A549 (cell line): ENCODE measurements at regions of chr3 and their contacts with region 1.

Region 1: DNA sequence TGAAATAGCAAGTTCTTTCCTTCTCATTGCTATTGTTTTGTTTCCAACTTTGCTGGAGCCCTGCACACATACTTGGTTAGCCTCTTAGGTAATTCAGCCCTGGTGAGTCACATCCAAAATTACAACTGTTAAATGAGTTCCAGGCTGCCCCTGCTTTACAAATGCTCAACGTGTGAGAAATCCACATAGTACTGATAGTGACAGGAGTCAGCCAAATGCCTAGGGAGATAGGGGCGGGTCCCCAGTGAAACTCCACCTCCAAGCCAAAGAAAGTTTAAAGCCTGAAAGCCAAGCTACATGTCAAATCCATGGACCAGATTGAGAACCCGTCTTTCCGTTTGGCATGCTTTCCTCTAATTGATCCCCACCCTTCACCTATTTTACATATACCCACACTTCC is 81.3 kb upstream of the RNF7 start:
- DNase-seq: no peak
- ATAC-seq: no peak
- H3K4me3 ChIP-seq: no peak overlapping the region
- H3K27ac ChIP-seq: no peak overlapping the region
- H3K4me1 ChIP-seq: no peaks in the 10 kb centered on the region
- CTCF ChIP-seq: no peak
- EP300 ChIP-seq: no peak
- POLR2A ChIP-seq: no peak
- RAD21 ChIP-seq: no peak

Region 2: DNA sequence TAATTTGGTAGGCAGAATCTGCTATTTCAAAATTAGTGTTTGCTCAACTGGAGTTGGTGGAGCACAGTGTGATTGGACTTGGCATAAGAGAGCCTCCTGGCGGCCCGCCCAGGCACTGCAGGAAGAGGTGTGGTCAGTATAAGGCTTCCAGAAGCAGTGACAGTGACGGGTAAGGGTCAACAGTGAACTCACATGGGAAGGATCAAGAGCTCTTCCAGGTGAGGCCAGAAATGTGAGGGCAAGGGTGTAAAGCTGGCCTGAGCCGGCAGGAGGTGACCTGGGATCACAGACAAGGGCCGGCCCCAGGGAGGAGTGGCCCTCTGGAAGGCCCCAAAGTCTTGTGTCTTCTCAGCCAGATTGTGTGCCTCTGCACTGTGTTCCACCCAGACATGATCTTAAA is 11.9 kb before region 1 on chr3:
- CTCF ChIA-PET with region 1: interaction called, 16 read pairs
- POLR2A ChIA-PET with region 1: no interaction called
- DNase-seq: peak; percentile 47 to 70
- ATAC-seq: peak; percentile 88 to 91
- H3K4me3 ChIP-seq: no peak overlapping the region
- H3K27ac ChIP-seq: no peak overlapping the region
- H3K4me1 ChIP-seq: peaks cover 4% of the 10 kb centered on the region; the same call in 1 of the 3 replicates
- CTCF ChIP-seq: peak; percentile 61
- EP300 ChIP-seq: no peak
- POLR2A ChIP-seq: no peak
- RAD21 ChIP-seq: peak; percentile 52 to 64